GM12878 (cell line): ENCODE measurements at regions of chr4 and their contacts with region 1.

Region 1: DNA sequence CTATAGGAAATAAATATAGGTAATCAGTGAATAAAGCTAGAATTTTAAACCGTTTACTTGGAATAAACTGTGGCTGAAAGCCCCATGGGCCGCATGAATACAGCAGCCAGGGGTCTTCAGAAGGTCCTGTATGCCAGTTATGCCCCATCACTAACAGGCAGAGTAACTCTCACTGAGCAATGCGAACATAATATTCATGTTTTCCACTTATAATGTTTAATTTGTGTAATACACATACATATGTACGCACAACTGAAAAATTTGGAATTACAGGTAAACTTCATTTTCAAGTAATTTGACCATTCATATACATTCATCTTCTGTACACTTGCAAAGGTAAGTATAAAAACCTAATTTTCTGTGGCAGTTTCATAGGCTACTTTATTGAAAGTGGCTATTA is 526.2 kb upstream of the ATOH1 start:
- DNase-seq: no peak
- ATAC-seq: no peak
- H3K4me3 ChIP-seq: no peak overlapping the region
- H3K27ac ChIP-seq: no peak overlapping the region
- H3K4me1 ChIP-seq: peaks cover 4% of the 10 kb centered on the region; the same call in 1 of the 2 replicates
- H3K27me3 ChIP-seq: no peaks in the 10 kb centered on the region
- CTCF ChIP-seq: no peak
- EP300 ChIP-seq: no peak
- POLR2A ChIP-seq: no peak
- RAD21 ChIP-seq: no peak

Region 2: GRCh38 chr4:93139118-93139517 is 163.2 kb before region 1 on chr4:
- CTCF ChIA-PET with region 1: no interaction called
- POLR2A ChIA-PET with region 1: no interaction called
- RAD21 ChIA-PET with region 1: no interaction called
- SMC1A ChIA-PET with region 1: no interaction called
- in situ Hi-C with region 1: no loop called
- intact Hi-C with region 1: no loop called
- DNase-seq: no peak
- ATAC-seq: no peak
- H3K4me3 ChIP-seq: no peak overlapping the region
- H3K27ac ChIP-seq: no peak overlapping the region
- H3K4me1 ChIP-seq: no peaks in the 10 kb centered on the region
- H3K27me3 ChIP-seq: no peaks in the 10 kb centered on the region
- CTCF ChIP-seq: no peak
- EP300 ChIP-seq: no peak
- POLR2A ChIP-seq: no peak
- RAD21 ChIP-seq: no peak

Region 3: GRCh38 chr4:93334003-93334402 is 31.7 kb after region 1 on chr4:
- CTCF ChIA-PET with region 1: interaction called, 3 read pairs
- POLR2A ChIA-PET with region 1: no interaction called
- RAD21 ChIA-PET with region 1: interaction called, 10 read pairs
- SMC1A ChIA-PET with region 1: interaction called, 6 read pairs
- in situ Hi-C with region 1: no loop called
- intact Hi-C with region 1: no loop called
- DNase-seq: peak; percentile 45
- ATAC-seq: peak; percentile 86
- H3K4me3 ChIP-seq: no peak overlapping the region
- H3K27ac ChIP-seq: no peak overlapping the region
- H3K4me1 ChIP-seq: no peaks in the 10 kb centered on the region
- H3K27me3 ChIP-seq: no peaks in the 10 kb centered on the region
- CTCF ChIP-seq: no peak
- EP300 ChIP-seq: no peak; a peak in 1 of 4 replicates
- POLR2A ChIP-seq: no peak
- RAD21 ChIP-seq: no peak

Region 4: GRCh38 chr4:93437991-93438390 is 135.7 kb after region 1 on chr4:
- CTCF ChIA-PET with region 1: no interaction called
- POLR2A ChIA-PET with region 1: no interaction called
- RAD21 ChIA-PET with region 1: no interaction called
- SMC1A ChIA-PET with region 1: no interaction called
- in situ Hi-C with region 1: no loop called
- intact Hi-C with region 1: no loop called
- DNase-seq: no peak
- ATAC-seq: no peak
- H3K4me3 ChIP-seq: no peak overlapping the region
- H3K27ac ChIP-seq: no peak overlapping the region
- H3K4me1 ChIP-seq: no peaks in the 10 kb centered on the region
- H3K27me3 ChIP-seq: no peaks in the 10 kb centered on the region
- CTCF ChIP-seq: no peak
- EP300 ChIP-seq: no peak
- POLR2A ChIP-seq: no peak
- RAD21 ChIP-seq: no peak